ENCODE measurements at regions of chr9 and their contacts with region 1.

Region 1: GRCh38 chr9:135413459-135413858 is 66.1 kb upstream of the PPP1R26 start:
- DNase-seq: no peak
- ATAC-seq: no peak

Region 2: GRCh38 chr9:135273008-135273407 is 140.5 kb before region 1 on chr9:
- intact Hi-C with region 1: no loop called
- DNase-seq: no peak
- ATAC-seq: no peak

Region 3: GRCh38 chr9:135343837-135344522 is 69.5 kb before region 1 on chr9:
- intact Hi-C with region 1: loop called (anchors 2 kb)
- DNase-seq: peak; percentile 80
- ATAC-seq: peak; percentile 76